Common myeloid progenitor, CD34-positive (primary cell): ENCODE measurements at regions of chr2 and their contacts with region 1.

Region 1: GRCh38 chr2:85589982-85590791 is 5.4 kb upstream of the RNF181 start:
- DNase-seq: no peak
- H3K4me3 ChIP-seq: peak overlapping the region in 1 of 7 experiments; percentile 39
- H3K27ac ChIP-seq: peak overlapping the region in 1 of 2 experiments; percentile 46
- H3K4me1 ChIP-seq: peaks cover 21 to 74% (median 70%) of the 10 kb centered on the region in 4 experiments
- H3K27me3 ChIP-seq: no peaks in the 10 kb centered on the region

Region 2: DNA sequence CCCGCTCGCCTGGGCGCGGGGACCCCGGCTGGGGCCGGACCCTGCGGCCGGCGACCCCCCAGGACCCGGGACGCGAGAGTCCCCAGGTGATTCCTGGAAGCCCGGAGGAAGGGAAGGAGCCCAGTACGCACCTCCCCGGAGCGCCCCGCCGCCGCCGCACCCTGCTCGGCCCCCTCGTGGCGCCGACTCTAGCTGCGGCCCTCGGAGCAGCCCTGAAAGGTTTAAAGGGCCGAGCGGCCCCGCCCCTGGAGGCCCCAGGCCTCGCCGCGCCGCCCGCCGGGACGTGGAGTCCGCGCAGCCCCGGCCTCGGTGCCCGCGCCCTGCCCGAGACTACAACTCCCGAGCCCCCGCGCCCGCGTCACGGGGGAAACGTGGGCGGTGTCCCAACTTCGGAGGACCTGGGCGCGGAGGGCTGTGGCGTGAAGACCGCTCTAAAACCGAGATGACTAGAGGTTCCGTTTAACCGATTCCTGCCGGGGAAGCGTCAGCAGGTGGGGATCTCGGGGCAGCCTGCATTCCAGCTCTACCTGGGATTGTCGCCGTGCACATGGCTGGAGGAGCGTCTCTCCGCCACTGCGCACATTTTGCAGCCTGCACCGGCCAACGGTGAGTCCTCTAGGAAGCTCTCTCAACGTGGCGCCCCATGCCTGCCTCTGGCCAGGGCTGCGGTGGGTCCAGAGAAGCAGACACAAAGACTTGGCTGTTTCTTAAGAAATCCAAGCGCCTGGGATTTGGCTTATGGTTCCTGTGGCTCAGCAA is 12.5 kb after region 1 on chr2 and contains the start of gene TMEM150A:
- CTCF ChIA-PET with region 1: interaction called, 15 read pairs
- POLR2A ChIA-PET with region 1: no interaction called
- DNase-seq: peak; percentile 85 to 93 (median 91)
- H3K4me3 ChIP-seq: peak within 1 kb of the TSS; percentile 56 to 96 (median 87)
- H3K27ac ChIP-seq: peak within 1 kb of the TSS in 1 of 2 experiments; percentile 40
- H3K4me1 ChIP-seq: peaks cover 5 to 30% (median 26%) of the 10 kb centered on the region in 4 experiments
- H3K27me3 ChIP-seq: no peaks in the 10 kb centered on the region

Region 3: GRCh38 chr2:85662899-85663593 is 72.9 kb after region 1 on chr2:
- CTCF ChIA-PET with region 1: no interaction called
- POLR2A ChIA-PET with region 1: no interaction called
- DNase-seq: no peak
- H3K4me3 ChIP-seq: no peak overlapping the region
- H3K27ac ChIP-seq: no peak overlapping the region
- H3K4me1 ChIP-seq: peaks cover 0 to 13% (median 2%) of the 10 kb centered on the region in 4 experiments
- H3K27me3 ChIP-seq: no peaks in the 10 kb centered on the region